ENCODE measurements at regions of chr1 and their contacts with region 1.

Region 1: DNA sequence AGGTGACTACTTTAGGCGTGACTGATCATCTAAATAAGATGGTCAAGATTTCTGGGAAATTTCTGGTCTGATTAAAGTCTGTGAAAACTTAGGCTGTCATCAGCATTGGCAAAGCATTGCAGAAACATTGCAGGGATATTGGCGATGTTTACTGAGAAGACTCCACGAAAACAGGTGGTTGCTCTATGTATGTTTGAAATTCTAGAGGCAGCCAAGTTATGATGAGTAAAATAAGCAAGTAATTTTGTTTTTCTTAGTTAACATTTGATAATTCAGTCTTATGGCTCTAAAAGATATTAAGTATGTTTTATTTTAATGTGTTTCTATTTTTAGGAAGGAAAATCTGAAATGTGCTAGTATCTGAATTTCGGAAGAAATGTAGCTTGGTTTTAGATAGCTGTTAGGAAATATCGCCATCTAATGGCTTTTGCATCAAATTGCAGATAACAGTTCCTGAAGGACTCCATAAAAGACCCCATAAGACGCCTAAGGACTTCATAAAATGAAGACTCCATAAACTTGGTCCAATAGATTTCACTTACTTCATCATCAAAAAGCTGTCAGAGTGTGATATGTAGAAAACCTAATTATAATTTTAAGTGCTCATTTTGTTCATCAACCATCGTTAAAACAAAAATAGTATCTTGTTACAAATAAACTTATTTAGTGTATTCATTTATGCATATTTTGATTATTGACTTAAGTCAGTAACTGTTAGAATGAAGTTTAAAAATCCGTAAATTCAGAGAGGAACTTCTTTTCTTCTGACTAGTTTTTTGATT is 344.6 kb downstream of the RYR2 start:
- DNase-seq: no peak
- H3K4me3 ChIP-seq: no peak overlapping the region
- H3K27ac ChIP-seq: peak overlapping the region in 1 of 2 donors; percentile 34
- H3K4me1 ChIP-seq: peaks cover 0 to 8% of the 10 kb centered on the region in 2 donors
- H3K27me3 ChIP-seq: no peaks in the 10 kb centered on the region
- CTCF ChIP-seq: peak; percentile 39 to 73 (median 48)

Region 2: DNA sequence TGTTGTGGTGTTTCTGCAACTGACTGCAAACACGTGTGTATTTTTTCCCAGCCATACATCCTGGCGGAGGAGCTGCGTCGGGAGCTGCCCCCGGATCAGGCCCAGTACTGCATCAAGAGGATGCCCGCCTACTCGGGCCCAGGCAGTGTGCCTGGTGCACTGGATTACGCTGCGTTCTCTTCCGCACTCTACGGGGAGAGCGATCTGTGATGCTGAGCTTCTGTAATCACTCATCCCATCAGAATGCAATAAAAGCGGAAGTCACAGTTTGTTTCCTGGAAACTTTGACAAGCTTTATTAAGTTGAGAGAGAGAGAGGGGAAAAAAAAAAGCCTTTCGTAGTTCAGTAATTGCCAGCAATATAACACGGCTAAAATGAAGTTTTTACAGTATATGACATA is 624.1 kb before region 1 on chr1:
- intact Hi-C with region 1: loop called (anchors 10 kb)
- DNase-seq: no peak
- H3K4me3 ChIP-seq: no peak overlapping the region
- H3K27ac ChIP-seq: no peak overlapping the region
- H3K4me1 ChIP-seq: no peaks in the 10 kb centered on the region
- H3K27me3 ChIP-seq: no peaks in the 10 kb centered on the region
- CTCF ChIP-seq: no peak

Region 3: DNA sequence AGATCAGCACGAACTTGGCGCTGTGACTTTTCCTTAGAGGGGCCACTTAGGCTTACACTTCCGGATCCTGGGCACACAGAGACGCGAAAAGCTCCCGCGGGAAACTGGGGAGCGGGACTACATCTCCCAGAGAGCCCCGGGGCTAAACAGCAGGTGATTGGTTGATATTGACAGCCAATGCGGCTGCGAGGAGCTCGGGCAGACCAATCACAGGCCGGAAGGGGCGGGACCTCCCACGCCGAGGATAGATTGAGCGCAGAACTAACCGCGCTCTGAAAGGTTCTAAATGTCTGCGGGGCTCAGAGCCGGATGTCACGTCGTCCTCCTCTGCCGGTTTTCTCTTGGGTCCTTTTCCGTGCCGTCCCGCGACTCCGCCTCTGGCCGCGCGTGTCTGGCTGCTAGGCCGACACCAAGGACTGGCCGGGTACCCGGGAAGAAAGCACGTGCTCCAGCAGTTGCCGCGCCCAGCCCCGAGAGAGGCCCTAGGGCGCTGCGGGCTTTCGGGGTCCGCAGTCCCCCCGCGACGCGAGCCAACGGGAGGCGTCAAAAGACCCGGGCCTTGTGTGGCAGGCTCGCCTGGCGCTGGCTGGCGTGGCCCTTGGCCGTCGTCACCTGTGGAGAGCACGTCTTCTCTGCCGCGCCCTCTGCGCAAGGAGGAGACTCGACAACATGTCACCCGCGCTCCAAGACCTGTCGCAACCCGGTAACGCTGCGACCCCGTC is 591.4 kb before region 1 on chr1 and contains the start of gene MTR:
- intact Hi-C with region 1: loop called (anchors 5 kb)
- DNase-seq: peak; percentile 95 to 99
- H3K4me3 ChIP-seq: peak within 1 kb of the TSS; percentile 89 to 96
- H3K27ac ChIP-seq: peak within 1 kb of the TSS; percentile 92 to 97
- H3K4me1 ChIP-seq: peaks cover 0 to 25% of the 10 kb centered on the region in 2 donors
- H3K27me3 ChIP-seq: no peaks in the 10 kb centered on the region
- CTCF ChIP-seq: no peak
- total RNA-seq, gene MTR: 36.1 TPM

Region 4: DNA sequence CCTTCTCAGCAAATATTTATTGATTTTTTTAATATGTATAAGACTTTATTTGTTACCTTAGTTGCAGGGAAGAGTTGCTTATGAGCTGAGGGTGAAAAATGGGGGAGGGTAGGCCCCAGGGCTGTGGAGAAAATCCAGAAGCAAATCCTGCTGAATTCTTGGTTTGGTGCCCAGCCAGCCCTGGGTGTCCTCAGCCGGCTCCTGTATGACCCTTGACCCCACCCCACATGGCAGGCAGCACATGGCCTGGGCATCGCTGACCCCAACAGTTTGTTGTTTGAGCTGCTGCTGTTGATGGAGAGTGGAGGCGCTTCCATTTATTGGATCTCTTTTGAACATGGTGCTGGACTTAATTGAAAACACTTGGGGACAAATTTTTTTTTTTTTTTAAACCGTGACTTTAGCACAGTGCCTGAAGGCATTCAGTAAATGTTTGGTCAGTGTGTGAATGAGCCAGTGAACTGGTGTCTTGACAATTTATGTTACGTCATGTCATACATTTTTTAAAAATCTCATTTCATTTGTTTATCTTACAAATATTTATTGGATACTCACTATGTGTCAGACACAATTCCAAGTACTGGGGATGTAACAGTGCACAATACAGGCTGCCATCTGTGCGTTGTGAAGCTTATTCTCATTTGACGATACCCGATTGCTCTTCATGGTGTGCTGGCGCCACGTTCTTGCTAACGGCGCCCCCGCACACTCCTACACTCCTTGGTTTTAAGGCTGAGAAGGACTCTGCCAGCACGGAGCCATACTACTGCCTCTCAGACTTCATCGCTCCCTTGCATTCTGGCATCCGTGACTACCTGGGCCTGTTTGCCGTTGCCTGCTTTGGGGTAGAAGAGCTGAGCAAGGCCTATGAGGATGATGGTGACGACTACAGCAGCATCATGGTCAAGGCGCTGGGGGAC is 492.7 kb before region 1 on chr1:
- intact Hi-C with region 1: loop called (anchors 5 kb)
- DNase-seq: no peak
- H3K4me3 ChIP-seq: no peak overlapping the region
- H3K27ac ChIP-seq: no peak overlapping the region
- H3K4me1 ChIP-seq: no peaks in the 10 kb centered on the region
- H3K27me3 ChIP-seq: no peaks in the 10 kb centered on the region
- CTCF ChIP-seq: no peak

Region 5: GRCh38 chr1:237041795-237042525 is 344.6 kb before region 1 on chr1 and contains the start of gene RYR2:
- intact Hi-C with region 1: loop called (anchors 1 kb)
- DNase-seq: no peak
- H3K4me3 ChIP-seq: peak within 1 kb of the TSS; percentile 73 to 90
- H3K27ac ChIP-seq: peak within 1 kb of the TSS; percentile 68 to 88
- H3K4me1 ChIP-seq: peaks cover 0 to 4% of the 10 kb centered on the region in 2 donors
- H3K27me3 ChIP-seq: no peaks in the 10 kb centered on the region
- CTCF ChIP-seq: peak; percentile 33 to 89 (median 62)
- total RNA-seq, gene RYR2: 15.2 TPM

Region 6: GRCh38 chr1:237287876-237288521 is 98.6 kb before region 1 on chr1:
- intact Hi-C with region 1: no loop called
- DNase-seq: no peak
- H3K4me3 ChIP-seq: no peak overlapping the region
- H3K27ac ChIP-seq: no peak overlapping the region
- H3K4me1 ChIP-seq: no peaks in the 10 kb centered on the region
- H3K27me3 ChIP-seq: no peaks in the 10 kb centered on the region
- CTCF ChIP-seq: no peak

Region 7: GRCh38 chr1:238537641-238538040 is 1151.1 kb after region 1 on chr1:
- intact Hi-C with region 1: no loop called
- DNase-seq: no peak
- H3K4me3 ChIP-seq: no peak overlapping the region
- H3K27ac ChIP-seq: no peak overlapping the region
- H3K4me1 ChIP-seq: no peaks in the 10 kb centered on the region
- H3K27me3 ChIP-seq: no peaks in the 10 kb centered on the region
- CTCF ChIP-seq: no peak

Measured in ascending aorta (tissue), 2 donors.